Esophagus squamous epithelium (tissue), 5 donors: ENCODE measurements at regions of chr18 and their contacts with region 1.

Region 1: DNA sequence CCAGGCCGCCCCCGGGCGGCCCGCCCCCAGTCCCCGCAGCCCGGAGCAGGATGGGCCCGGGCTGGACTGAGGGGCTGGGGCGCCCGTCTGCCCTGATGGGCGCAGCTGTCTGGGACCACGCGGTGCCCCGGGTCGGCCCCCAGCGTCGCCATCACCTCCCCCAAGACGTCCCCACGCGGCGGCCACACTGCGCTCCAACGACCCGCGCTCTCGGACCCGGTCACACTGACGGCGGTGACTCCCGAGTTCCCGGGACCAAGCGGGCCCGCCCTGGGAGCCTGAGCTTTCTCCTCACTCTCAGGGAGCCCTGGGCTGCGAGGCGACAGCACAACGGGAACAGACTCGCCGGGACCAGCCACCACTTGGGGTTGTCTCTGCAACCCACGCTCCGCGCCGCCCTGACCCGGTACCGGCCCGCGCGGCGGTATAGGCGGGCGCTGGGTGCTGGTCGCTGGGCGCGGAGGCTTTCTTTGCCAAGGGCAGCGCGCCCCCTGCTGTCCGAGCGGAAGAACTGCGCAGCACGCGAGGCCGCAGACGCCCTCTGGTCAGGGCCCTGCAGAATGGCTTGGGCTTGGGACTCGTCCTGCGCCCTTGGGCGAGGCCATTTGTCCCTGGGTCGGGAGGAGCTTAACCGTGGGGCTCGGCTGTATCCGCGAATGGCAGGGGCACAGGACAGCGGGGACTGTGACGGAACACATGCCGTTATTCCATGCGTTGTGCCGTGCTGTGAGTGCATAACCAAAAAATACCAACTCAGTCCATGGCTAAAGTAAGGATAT is 54.8 kb upstream of the ANKRD62 start:
- DNase-seq: no peak
- H3K4me3 ChIP-seq: peak overlapping the region; percentile 36 to 73 (median 54)
- H3K27ac ChIP-seq: peak overlapping the region; percentile 62 to 90 (median 84)
- H3K4me1 ChIP-seq: peaks cover 13 to 59% (median 15%) of the 10 kb centered on the region in 3 donors
- H3K27me3 ChIP-seq: peaks cover 0 to 7% (median 0%) of the 10 kb centered on the region in 4 donors
- CTCF ChIP-seq: peak; percentile 95 to 99 (median 98)
- POLR2A ChIP-seq: no peak

Region 2: DNA sequence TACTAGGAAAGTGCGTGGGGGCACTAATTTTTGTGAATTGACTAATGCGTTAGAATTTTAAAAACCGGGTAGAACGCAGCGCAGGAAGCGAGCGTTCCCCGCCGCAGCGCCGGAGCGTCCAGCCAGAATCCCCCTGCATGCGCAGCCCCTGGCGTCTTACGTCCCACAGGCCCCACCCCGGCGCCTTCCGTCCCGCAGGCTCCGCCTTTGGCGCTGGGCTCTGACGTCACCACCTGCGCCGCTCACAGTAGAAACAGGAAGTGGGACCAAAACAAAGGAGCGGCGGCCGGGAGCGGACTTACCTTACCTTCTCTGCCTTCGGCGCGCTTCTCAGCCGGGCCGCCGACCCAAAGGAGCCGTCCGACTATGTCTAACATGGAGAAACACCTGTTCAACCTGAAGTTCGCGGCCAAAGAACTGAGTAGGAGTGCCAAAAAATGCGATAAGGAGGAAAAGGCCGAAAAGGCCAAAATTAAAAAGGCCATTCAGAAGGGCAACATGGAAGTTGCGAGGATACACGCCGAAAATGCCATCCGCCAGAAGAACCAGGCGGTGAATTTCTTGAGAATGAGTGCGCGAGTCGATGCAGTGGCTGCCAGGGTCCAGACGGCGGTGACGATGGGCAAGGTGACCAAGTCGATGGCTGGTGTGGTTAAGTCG is 187.6 kb before region 1 on chr18 and contains the start of gene CHMP1B:
- intact Hi-C with region 1: loop called (anchors 10 kb)
- DNase-seq: peak; percentile 86
- H3K4me3 ChIP-seq: peak within 1 kb of the TSS; percentile 70 to 87 (median 80)
- H3K27ac ChIP-seq: peak within 1 kb of the TSS; percentile 95 to 98 (median 96)
- H3K4me1 ChIP-seq: peaks cover 0 to 49% (median 25%) of the 10 kb centered on the region in 3 donors
- H3K27me3 ChIP-seq: no peaks in the 10 kb centered on the region
- CTCF ChIP-seq: peak in 3 of 6 experiments; percentile 16 to 35 (median 26)
- POLR2A ChIP-seq: peak in 3 of 4 donors; percentile 97 to 100 (median 99)
- total RNA-seq, gene CHMP1B: 35.3 to 48.3 (median 42.3) TPM

Region 3: DNA sequence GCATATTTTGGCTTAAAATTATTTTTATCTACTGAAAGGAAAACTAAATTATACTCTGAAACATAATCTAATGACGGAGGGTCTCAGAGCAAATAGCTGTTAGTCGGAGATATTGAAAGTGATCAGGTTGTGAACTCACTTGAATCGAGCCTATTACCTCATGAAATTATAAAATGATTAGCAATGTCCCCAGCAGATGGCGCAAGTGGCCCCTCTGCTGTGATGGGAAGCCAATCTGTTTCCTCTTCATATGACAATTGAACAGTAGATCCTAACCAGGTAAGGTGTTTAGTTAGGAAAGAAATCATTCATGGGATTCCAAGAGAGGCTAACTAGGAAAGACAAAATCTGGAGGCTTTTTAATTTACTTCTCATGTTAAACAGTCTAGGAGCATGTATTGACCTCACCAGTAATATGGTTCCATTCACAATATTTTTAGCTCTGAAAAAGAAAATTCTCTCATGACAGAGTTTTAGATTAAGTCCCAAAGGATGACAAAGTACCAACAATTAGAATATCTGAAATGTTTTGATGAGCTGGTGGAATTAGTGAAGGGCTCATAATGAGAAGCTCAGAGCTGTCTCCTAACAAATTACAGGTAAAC is 100.9 kb before region 1 on chr18:
- intact Hi-C with region 1: loop called (anchors 5 kb)
- DNase-seq: no peak
- H3K4me3 ChIP-seq: no peak overlapping the region
- H3K27ac ChIP-seq: no peak overlapping the region
- H3K4me1 ChIP-seq: no peaks in the 10 kb centered on the region
- H3K27me3 ChIP-seq: no peaks in the 10 kb centered on the region
- CTCF ChIP-seq: peak; percentile 57 to 88 (median 82)
- POLR2A ChIP-seq: no peak